WTC11 (cell line): ENCODE measurements at regions of chr10 and their contacts with region 1.

Region 1: GRCh38 chr10:1420661-1421362 is 316.5 kb downstream of the ADARB2 start:
- DNase-seq: peak; percentile 94
- ATAC-seq: peak; percentile 99
- H3K4me3 Mint-ChIP-seq: peak overlapping the region; percentile 77
- H3K27ac Mint-ChIP-seq: no peak overlapping the region
- H3K4me1 Mint-ChIP-seq: peaks cover 29% of the 10 kb centered on the region
- H3K27me3 Mint-ChIP-seq: peaks cover 45% of the 10 kb centered on the region
- CTCF ChIP-seq: peak; percentile 77

Region 2: GRCh38 chr10:1403508-1404322 is 17.1 kb before region 1 on chr10:
- CTCF ChIA-PET with region 1: interaction called, 31 read pairs
- POLR2A ChIA-PET with region 1: no interaction called
- DNase-seq: peak; percentile 53
- ATAC-seq: peak; percentile 84
- H3K4me3 Mint-ChIP-seq: no peak overlapping the region
- H3K27ac Mint-ChIP-seq: no peak overlapping the region
- H3K4me1 Mint-ChIP-seq: peaks cover 14% of the 10 kb centered on the region
- H3K27me3 Mint-ChIP-seq: no peaks in the 10 kb centered on the region; the same call in 1 of the 2 replicates
- CTCF ChIP-seq: no peak

Region 3: DNA sequence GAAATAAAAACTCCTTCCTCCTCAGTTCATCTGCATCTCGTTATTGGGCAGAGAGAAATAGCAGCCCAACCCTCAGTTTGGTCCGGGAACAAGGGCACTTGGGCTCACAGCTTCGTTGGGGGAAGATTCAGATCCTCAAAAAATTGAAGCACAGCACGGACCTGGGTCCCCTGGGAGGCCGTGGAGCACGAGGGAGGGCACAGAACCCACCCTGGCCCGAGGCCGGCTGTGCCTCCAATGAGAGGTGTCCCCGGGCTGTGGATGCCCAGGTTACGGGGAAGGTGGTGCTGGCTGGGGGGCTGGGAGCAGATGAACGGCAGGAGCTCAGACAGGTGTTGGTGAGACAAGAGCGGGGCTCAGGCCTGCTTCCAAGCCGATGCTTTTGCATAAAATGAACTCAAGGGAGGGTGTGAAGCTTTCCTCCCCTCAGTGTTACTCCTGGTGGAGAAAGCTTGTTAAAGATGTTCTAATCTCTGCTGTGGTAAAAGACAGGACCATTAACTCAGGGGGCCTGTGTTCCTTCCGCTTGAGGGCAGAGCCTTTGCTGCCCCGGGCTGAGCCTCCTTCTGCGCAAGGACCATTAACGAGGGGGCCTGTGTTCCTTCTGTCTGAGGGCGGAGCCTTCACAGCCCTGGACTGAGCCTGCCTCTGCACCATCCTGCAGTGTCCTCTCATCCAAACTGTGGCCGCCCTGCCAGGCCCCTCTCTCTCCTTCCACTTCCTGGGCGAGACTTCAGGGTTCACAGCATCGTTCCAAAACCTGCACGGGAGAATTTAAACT is 14.3 kb after region 1 on chr10:
- CTCF ChIA-PET with region 1: interaction called, 20 read pairs
- POLR2A ChIA-PET with region 1: no interaction called
- DNase-seq: no peak
- ATAC-seq: peak; percentile 66
- H3K4me3 Mint-ChIP-seq: no peak overlapping the region
- H3K27ac Mint-ChIP-seq: no peak overlapping the region
- H3K4me1 Mint-ChIP-seq: peaks cover 30% of the 10 kb centered on the region
- H3K27me3 Mint-ChIP-seq: peaks cover 5% of the 10 kb centered on the region; the same call in 1 of the 2 replicates
- CTCF ChIP-seq: no peak

Region 4: GRCh38 chr10:1581189-1581588 is 160.4 kb after region 1 on chr10:
- CTCF ChIA-PET with region 1: interaction called, 21 read pairs
- POLR2A ChIA-PET with region 1: no interaction called
- DNase-seq: no peak
- ATAC-seq: peak; percentile 82
- H3K4me3 Mint-ChIP-seq: no peak overlapping the region
- H3K27ac Mint-ChIP-seq: no peak overlapping the region
- H3K4me1 Mint-ChIP-seq: no peaks in the 10 kb centered on the region
- H3K27me3 Mint-ChIP-seq: peaks cover 14% of the 10 kb centered on the region
- CTCF ChIP-seq: no peak